Posterior vena cava (tissue), 2 donors: ENCODE measurements at regions of chr5 and their contacts with region 1.

Region 1: GRCh38 chr5:130488252-130488651 is 584.0 kb downstream of the CHSY3 start:
- DNase-seq: no peak

Region 2: GRCh38 chr5:129377504-129377903 is 1110.7 kb before region 1 on chr5:
- intact Hi-C with region 1: loop called in 1 of 2 experiments (anchors 10 kb)
- DNase-seq: no peak